Ascending aorta (tissue), 2 donors: ENCODE measurements at regions of chr10 and their contacts with region 1.

Region 1: GRCh38 chr10:5094265-5095205 is at the start of gene AKR1C3:
- DNase-seq: no peak
- H3K4me3 ChIP-seq: peak within 1 kb of the TSS; percentile 56 to 66
- H3K27ac ChIP-seq: peak within 1 kb of the TSS; percentile 63 to 65
- H3K4me1 ChIP-seq: peaks cover 0 to 8% of the 10 kb centered on the region in 2 donors
- H3K27me3 ChIP-seq: no peaks in the 10 kb centered on the region
- CTCF ChIP-seq: peak; percentile 71 to 84 (median 74)
- total RNA-seq, gene AKR1C3: 64.4 TPM

Region 2: DNA sequence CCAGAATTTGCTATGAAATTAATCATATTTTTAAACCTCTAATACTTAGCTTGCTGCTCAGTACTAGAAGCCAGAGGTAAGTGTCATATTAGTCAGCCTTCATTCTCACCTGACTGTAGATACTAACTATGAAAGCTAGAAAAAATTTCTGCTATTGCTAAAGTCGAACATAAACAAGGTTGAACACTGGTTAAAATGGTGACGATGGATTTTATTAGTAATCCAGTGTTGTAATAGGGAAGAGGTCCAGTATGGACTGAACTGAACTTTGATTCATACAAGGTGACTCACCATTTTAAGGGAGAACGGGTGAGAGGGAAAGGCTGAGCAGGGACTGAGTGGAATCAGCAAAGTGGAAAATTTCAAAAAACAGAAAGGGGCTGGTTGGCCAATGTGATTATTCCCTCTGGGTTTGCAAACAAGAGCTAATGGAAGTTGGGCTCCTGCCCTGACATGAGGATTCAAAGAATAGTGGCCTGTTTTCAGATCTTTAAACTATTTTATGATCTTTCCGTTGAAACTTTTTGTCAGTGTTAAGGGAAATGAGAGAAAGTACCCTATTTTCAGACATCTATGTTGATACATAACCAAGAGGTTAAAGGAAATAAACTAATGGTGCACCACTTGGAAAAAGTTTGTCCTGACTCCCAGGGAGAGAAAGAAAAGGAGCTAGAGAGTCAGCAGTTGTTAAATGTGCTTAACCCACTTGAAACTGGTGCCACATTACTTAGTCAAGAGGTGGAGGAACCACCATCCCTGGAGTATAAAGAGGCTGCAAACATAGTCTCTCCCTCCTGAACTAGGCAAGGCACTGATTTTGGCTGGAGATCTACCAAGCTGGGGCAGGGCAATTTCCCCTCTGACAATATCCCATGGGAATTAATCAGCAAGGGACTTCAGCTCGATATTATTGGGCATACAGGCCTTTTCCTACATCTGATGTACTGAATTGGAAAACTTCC is 146.6 kb before region 1 on chr10:
- intact Hi-C with region 1: loop called (anchors 5 kb)
- DNase-seq: peak in 1 of 2 donors; percentile 87
- H3K4me3 ChIP-seq: no peak overlapping the region
- H3K27ac ChIP-seq: peak overlapping the region; percentile 80 to 94
- H3K4me1 ChIP-seq: peaks cover 15 to 41% of the 10 kb centered on the region in 2 donors
- H3K27me3 ChIP-seq: no peaks in the 10 kb centered on the region
- CTCF ChIP-seq: no peak

Region 3: GRCh38 chr10:5014936-5015335 is 79.6 kb before region 1 on chr10:
- intact Hi-C with region 1: loop called (anchors 1 kb)
- DNase-seq: no peak
- H3K4me3 ChIP-seq: no peak overlapping the region
- H3K27ac ChIP-seq: no peak overlapping the region
- H3K4me1 ChIP-seq: peaks cover 5 to 33% of the 10 kb centered on the region in 2 donors
- H3K27me3 ChIP-seq: no peaks in the 10 kb centered on the region
- CTCF ChIP-seq: no peak

Region 4: GRCh38 chr10:5283305-5284158 is 189.0 kb after region 1 on chr10:
- intact Hi-C with region 1: loop called (anchors 5 kb)
- DNase-seq: peak in 1 of 2 donors; percentile 75
- H3K4me3 ChIP-seq: no peak overlapping the region
- H3K27ac ChIP-seq: no peak overlapping the region
- H3K4me1 ChIP-seq: no peaks in the 10 kb centered on the region
- H3K27me3 ChIP-seq: no peaks in the 10 kb centered on the region
- CTCF ChIP-seq: peak; percentile 53 to 65 (median 60)

Region 5: DNA sequence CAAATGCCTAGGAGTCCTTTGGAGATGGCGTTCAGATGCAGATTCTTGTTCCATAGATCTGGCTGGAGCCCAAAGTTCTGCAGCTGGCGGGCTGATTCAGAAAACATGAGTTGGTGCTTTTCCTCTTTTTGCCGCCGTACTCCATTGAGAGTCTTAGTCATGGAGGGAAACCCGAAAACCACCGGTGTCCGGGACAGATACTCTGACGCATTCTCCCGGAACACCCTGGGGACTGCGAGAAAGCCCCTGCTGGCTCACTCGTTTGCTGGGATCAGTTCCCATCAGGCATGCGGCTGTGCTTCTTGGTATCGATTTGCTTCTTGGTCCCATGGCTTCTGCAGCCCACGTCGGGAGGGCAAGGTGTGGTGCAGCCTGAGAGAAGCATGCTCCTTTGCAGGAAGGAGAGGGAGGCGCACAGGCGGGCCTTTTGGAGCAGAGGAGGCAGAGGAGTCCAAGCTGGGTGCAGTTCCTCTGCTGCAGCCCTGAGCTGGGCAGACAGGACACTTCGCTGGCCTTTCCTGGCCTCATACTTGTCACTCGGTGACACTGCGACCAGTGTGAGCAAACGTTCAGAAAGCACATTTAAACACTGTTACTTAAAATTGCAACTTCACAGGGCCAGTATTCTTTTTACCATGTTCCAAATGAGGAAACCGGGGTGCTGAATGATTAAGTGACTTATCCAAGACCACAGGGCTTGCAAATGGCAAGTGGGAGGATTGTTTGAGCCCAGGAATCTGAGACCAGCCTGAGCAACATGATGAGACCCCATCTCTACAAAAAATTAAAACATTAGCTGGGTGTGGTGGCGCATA is 1077.6 kb after region 1 on chr10:
- intact Hi-C with region 1: no loop called
- DNase-seq: peak; percentile 53 to 87
- H3K4me3 ChIP-seq: peak overlapping the region in 1 of 2 donors; percentile 23
- H3K27ac ChIP-seq: peak overlapping the region; percentile 74 to 85
- H3K4me1 ChIP-seq: peaks cover 24 to 57% of the 10 kb centered on the region in 2 donors
- H3K27me3 ChIP-seq: no peaks in the 10 kb centered on the region
- CTCF ChIP-seq: no peak

Region 6: DNA sequence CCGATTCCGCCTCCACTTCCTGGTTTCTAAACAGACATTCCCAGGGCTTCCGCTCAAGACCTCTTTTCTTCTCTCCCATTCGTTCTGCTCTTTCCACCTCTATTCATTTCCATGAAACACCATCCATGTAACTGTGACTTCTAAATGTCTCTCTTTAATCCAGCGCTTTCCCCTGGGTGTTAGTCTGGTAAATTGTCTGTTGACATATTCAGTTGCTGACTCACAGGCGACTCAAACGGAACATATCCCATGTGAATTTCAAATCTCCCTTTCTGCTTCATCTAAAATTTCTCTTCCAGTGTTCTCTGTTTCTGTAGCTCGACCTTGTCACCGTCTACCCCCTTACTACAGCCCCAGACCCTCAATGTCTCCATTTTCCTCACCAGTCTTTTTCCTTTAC is 1227.3 kb after region 1 on chr10:
- intact Hi-C with region 1: no loop called
- DNase-seq: no peak
- H3K4me3 ChIP-seq: no peak overlapping the region
- H3K27ac ChIP-seq: peak overlapping the region; percentile 12 to 40
- H3K4me1 ChIP-seq: peaks cover 2 to 5% of the 10 kb centered on the region in 2 donors
- H3K27me3 ChIP-seq: no peaks in the 10 kb centered on the region
- CTCF ChIP-seq: no peak